Aorta (tissue), 5 donors: ENCODE measurements at regions of chr21 and their contacts with region 1.

Region 1: GRCh38 chr21:34345091-34345871 is 18.5 kb upstream of the KCNE2 start:
- DNase-seq: no peak
- ATAC-seq: no peak
- H3K4me3 ChIP-seq: no peak overlapping the region
- H3K27ac ChIP-seq: peak overlapping the region in 1 of 2 donors; percentile 28
- H3K4me1 ChIP-seq: no peaks in the 10 kb centered on the region
- H3K27me3 ChIP-seq: no peaks in the 10 kb centered on the region

Region 2: GRCh38 chr21:33936301-33937038 is 408.8 kb before region 1 on chr21:
- intact Hi-C with region 1: loop called in 1 of 2 experiments (anchors 5 kb)
- DNase-seq: no peak
- ATAC-seq: no peak
- H3K4me3 ChIP-seq: no peak overlapping the region
- H3K27ac ChIP-seq: no peak overlapping the region
- H3K4me1 ChIP-seq: no peaks in the 10 kb centered on the region
- H3K27me3 ChIP-seq: no peaks in the 10 kb centered on the region

Region 3: DNA sequence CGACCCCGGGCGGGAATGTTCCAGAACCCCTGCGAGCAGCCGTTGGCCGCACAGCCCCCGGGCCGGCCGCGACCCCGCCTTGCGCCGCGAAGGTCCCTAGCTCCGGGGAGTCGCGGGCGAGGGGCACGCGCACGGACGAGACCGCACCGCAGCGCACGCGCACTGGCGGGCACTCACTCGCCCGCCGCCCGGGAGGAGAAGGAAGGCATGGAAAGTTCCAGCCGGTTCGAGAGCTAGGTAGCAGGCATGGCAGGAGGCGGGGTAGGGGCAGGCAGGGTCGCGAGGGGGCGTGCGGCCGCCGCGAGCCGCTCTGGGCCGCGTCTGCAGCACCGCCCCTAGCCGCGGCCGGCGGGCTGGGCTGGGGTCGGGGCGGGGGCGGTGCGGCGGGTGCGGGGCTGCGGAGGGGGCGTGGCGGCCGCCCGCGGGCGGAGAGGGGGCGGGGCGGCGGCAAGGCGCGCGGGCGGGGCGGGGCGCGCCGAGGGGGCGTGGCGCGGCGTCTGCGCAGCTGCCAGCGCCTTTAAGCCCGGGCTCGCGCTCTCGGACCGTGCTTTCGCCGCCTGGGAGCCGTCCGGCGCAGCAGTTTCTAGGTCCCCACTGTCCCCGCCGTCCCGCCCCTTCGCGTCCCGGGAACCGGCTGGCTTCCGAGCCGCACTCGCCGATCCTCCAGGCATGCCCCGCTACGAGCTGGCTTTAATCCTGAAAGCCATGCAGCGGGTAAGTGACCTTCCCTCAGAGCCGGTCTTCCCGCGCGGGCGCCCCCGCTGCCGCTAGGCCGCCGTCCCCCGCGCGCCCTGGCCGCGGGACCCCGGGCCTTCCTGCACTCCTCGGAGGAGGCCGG is 272.0 kb before region 1 on chr21 and contains the starts of genes MRPS6 and SLC5A3:
- intact Hi-C with region 1: loop called in 1 of 2 experiments (anchors 5 kb)
- DNase-seq: peak; percentile 91 to 94
- ATAC-seq: peak; percentile 91
- H3K4me3 ChIP-seq: peak within 1 kb of the TSS; percentile 93 to 100
- H3K27ac ChIP-seq: peak within 1 kb of the TSS; percentile 63 to 96
- H3K4me1 ChIP-seq: peaks cover 0 to 3% of the 10 kb centered on the region in 2 donors
- H3K27me3 ChIP-seq: no peaks in the 10 kb centered on the region
- total RNA-seq, gene MRPS6: 78.4 to 137 TPM
- total RNA-seq, gene SLC5A3: 25.2 to 82.3 TPM

Region 4: DNA sequence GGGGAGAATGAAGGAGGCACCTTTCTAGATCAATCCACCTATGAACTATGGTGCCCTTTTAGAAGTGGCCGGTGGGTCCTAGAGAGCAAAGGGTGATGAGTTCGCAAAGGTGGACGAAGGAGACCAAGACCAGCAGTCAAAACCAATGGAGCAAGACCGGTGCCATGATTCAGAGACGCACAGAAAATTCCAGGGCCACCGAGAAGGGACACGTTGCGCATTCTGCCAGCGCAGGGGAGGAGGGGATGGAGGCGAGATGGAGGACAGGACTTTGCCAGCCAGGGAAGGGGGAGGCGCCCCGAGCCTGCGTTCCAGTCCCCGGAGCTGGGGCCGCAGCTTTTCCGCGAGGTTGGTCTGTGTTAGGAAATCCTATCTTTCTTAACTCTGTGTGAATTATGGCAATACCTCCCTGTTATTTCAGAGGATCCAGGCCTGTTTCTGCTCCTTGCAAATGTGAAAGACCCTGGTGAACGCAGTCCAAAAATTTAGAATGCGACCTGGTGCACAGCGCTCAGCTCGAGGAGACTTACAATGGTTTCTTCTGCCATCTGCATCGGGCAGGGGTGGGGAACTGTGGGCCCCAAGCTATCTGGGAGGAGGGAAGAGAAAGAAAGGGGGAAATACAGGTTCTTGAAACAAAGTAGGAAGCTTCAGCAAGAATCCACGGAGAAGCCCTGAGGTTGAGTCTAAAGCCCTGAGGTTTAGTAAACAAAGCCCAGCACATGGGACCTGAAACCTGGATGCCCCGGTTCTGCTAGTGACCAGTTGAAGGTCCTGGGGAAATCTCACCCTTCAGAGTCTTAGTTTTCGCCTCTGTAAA is 142.5 kb before region 1 on chr21:
- intact Hi-C with region 1: loop called in 1 of 2 experiments (anchors 5 kb)
- DNase-seq: peak; percentile 72 to 84
- ATAC-seq: peak; percentile 60
- H3K4me3 ChIP-seq: no peak overlapping the region
- H3K27ac ChIP-seq: peak overlapping the region; percentile 77 to 79
- H3K4me1 ChIP-seq: no peaks in the 10 kb centered on the region
- H3K27me3 ChIP-seq: no peaks in the 10 kb centered on the region